Transverse colon (tissue), 4 donors: ENCODE measurements at regions of chr12 and their contacts with region 1.

Region 1: GRCh38 chr12:46492471-46493351 is 120.1 kb upstream of the SLC38A2 start:
- DNase-seq: no peak
- H3K4me3 ChIP-seq: no peak overlapping the region
- H3K27ac ChIP-seq: peak overlapping the region in 2 of 4 donors; percentile 18 to 38
- H3K4me1 ChIP-seq: peaks cover 4 to 19% (median 10%) of the 10 kb centered on the region in 4 donors
- H3K27me3 ChIP-seq: no peaks in the 10 kb centered on the region
- CTCF ChIP-seq: no peak
- EP300 ChIP-seq: no peak
- POLR2A ChIP-seq: no peak

Region 2: GRCh38 chr12:46430340-46430948 is 62.3 kb before region 1 on chr12:
- in situ Hi-C with region 1: no loop called
- intact Hi-C with region 1: loop called (anchors 2 kb)
- DNase-seq: no peak
- H3K4me3 ChIP-seq: no peak overlapping the region
- H3K27ac ChIP-seq: peak overlapping the region; percentile 56 to 81 (median 68)
- H3K4me1 ChIP-seq: peaks cover 7 to 30% (median 18%) of the 10 kb centered on the region in 4 donors
- H3K27me3 ChIP-seq: no peaks in the 10 kb centered on the region
- CTCF ChIP-seq: no peak
- EP300 ChIP-seq: no peak
- POLR2A ChIP-seq: no peak